Left cardiac atrium (tissue), 4 donors: ENCODE measurements at regions of chr3 and their contacts with region 1.

Region 1: DNA sequence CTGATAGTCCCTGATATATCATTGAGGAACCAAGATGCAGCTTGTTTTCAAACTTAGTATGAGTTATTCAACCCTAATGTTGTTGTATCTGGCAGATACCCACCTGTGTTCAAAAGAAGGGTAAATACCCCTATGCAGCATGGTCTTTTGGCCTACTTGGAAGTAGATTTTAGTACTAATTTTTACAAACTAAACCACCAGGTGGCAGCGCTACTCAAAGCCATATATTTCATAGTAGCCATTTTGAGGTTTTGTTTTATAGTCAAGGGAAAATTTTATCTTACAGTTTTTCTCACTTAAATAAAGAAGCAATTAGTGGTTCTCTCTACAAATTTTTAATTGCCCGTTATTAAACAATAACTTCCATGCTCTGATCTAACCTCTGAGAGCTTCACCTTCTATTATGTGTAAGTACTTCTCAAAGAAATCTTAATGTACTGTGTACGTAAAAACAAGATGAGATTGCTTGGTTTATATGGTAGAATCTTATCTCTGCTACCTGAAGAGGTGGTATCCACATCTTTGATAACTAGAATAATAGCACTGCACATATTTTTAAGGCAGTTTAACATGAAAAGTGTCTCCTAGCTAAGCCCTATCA is 31.5 kb upstream of the MLF1 start:
- DNase-seq: no peak
- ATAC-seq: peak in 1 of 2 donors; percentile 36

Region 2: GRCh38 chr3:157493627-157494550 is 1045.6 kb before region 1 on chr3:
- intact Hi-C with region 1: no loop called
- DNase-seq: no peak
- ATAC-seq: peak; percentile 18 to 47

Region 3: GRCh38 chr3:157618075-157618760 is 921.3 kb before region 1 on chr3:
- intact Hi-C with region 1: loop called in 1 of 2 experiments (anchors 10 kb)
- DNase-seq: no peak
- ATAC-seq: peak; percentile 26 to 34

Region 4: GRCh38 chr3:158644345-158644908 is 104.9 kb after region 1 on chr3 and contains the start of gene GFM1:
- intact Hi-C with region 1: loop called in 1 of 2 experiments (anchors 5 kb)
- DNase-seq: peak; percentile 95
- ATAC-seq: peak; percentile 98 to 99
- total RNA-seq, gene GFM1: 41.9 to 50.9 TPM